Ovary (tissue), 10 donors: ENCODE measurements at regions of chr9 and their contacts with region 1.

Region 1: DNA sequence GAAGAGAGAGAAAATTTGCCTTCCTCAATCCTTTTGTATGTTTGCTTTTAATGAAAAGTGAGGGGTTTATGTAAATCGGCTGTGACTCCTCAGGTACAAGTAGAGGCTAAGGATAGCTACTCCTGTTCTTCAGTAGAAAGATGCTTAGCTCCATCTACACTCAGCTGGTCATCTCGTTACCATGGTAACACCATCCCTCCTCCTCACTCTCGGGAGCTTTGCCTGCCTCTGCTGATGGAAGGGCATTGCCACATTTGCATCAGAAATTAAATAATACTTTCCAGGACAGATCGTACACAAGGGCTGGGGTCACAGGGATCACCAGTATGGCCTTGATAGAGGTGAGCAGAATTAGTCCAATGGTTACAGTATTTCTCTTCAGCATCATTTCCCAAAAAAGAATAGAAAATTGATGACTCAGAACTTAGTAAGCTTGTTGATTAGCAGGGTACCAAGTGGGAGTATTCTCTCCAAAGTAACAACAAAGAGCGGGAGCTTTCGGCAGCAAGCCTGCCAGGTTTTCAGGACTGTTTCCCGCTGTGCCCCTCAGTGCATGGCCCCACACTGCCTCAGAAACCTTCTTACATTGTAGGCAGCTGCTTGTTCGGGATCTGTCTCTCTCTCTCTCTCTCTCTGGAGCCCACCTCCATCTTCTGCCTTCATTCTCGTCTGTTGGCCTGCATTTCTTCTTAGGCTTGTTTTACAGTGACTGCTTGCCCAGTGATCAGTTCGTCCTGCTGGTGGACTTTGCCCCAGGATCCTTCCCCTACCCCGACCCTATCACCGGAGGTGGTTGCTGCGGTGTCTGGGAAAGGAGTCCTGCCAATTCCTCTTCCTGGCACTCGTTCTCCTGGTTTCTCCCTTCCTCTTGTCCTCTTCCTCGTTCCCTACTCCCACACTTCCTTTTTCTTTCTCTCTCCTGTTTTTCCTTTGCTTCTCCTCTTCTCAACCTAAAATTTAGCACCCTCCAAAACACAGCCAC is 51.9 kb upstream of the SNAPC3 start:
- DNase-seq: peak; percentile 39 to 70 (median 50)
- H3K4me3 ChIP-seq: no peak overlapping the region
- H3K27ac ChIP-seq: peak overlapping the region in 1 of 2 donors; percentile 33
- H3K4me1 ChIP-seq: peaks cover 8% of the 10 kb centered on the region
- H3K27me3 ChIP-seq: no peaks in the 10 kb centered on the region
- CTCF ChIP-seq: no peak
- EP300 ChIP-seq: no peak
- POLR2A ChIP-seq: no peak

Region 2: GRCh38 chr9:15306757-15307534 is 63.8 kb before region 1 on chr9 and contains the start of gene TTC39B:
- intact Hi-C with region 1: loop called in 1 of 4 experiments (anchors 10 kb)
- DNase-seq: peak; percentile 90 to 96 (median 93)
- H3K4me3 ChIP-seq: peak within 1 kb of the TSS; percentile 84
- H3K27ac ChIP-seq: peak within 1 kb of the TSS; percentile 79 to 90
- H3K4me1 ChIP-seq: no peaks in the 10 kb centered on the region
- H3K27me3 ChIP-seq: no peaks in the 10 kb centered on the region
- CTCF ChIP-seq: no peak
- EP300 ChIP-seq: no peak
- POLR2A ChIP-seq: peak; percentile 78
- total RNA-seq, gene TTC39B: 8.6 to 26.0 (median 15.3) TPM

Region 3: DNA sequence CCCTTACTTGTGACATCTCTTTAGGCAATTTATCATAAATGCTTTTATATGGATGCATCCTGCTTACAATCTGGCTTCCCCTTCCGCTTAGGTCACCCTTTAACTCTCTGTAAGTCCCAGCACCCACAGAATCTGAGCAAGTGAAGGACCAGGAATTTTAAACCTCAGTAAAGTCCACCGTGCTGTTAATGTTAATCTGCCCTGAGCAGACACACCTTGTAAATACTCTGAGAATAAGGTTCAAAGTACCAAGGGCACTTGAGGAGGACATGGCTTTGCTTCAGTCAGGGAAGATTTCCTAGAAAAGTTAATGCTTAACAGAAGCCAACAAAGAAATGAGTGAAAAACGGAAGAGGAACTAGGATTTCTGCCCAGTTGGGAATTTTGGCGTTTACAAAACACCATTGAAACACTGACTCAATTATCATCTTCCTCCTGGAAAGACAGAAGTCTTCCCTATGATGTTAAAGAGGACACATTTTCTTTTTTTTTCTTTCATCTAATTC is 37.3 kb before region 1 on chr9:
- intact Hi-C with region 1: no loop called
- DNase-seq: no peak
- H3K4me3 ChIP-seq: no peak overlapping the region
- H3K27ac ChIP-seq: no peak overlapping the region
- H3K4me1 ChIP-seq: no peaks in the 10 kb centered on the region
- H3K27me3 ChIP-seq: no peaks in the 10 kb centered on the region
- CTCF ChIP-seq: no peak
- EP300 ChIP-seq: no peak
- POLR2A ChIP-seq: no peak

Region 4: DNA sequence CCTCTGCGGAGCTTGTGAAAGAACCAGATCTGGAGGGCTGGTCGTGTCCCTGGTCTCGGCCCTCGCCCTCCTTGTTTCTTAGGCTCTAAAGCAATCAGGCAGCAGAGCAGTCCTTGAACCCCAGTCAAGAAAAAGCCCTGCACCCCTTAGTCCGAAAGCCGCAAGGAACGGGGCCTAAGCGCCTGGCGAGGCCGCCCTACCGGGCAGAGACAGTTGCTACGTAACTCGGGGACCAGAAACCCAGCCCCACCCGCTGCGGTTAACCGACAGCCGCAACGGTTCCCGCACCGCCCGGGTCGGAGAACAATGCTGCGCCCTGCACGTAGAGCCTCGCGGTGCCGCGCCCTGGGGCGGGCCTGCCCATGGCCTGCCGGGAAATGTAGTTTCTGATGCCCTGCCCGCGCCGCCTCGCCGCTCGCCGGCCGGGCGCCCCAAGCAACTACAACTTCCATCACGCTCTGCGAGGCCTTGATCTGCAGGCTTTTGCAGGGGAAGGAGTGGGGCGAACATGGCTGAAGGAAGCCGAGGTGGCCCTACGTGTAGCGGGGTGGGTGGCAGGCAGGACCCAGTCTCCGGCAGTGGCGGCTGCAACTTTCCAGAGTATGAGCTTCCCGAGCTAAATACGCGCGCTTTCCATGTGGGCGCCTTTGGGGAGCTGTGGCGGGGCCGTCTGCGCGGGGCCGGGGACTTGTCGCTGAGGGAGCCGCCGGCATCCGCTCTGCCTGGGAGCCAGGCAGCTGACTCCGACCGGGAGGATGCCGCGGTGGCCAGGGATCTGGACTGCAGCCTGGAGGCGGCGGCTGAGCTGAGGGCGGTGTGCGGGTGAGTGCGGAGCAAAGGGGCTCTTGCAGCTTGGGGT is 51.8 kb after region 1 on chr9 and contains the start of gene SNAPC3:
- intact Hi-C with region 1: loop called in 1 of 4 experiments (anchors 10 kb)
- DNase-seq: peak; percentile 89 to 94 (median 93)
- H3K4me3 ChIP-seq: peak within 1 kb of the TSS; percentile 80
- H3K27ac ChIP-seq: peak within 1 kb of the TSS; percentile 47 to 90
- H3K4me1 ChIP-seq: peaks cover 3% of the 10 kb centered on the region
- H3K27me3 ChIP-seq: no peaks in the 10 kb centered on the region
- CTCF ChIP-seq: no peak
- EP300 ChIP-seq: peak; percentile 74
- POLR2A ChIP-seq: peak; percentile 39
- total RNA-seq, gene SNAPC3: 18.8 to 32.3 (median 26.2) TPM

Region 5: DNA sequence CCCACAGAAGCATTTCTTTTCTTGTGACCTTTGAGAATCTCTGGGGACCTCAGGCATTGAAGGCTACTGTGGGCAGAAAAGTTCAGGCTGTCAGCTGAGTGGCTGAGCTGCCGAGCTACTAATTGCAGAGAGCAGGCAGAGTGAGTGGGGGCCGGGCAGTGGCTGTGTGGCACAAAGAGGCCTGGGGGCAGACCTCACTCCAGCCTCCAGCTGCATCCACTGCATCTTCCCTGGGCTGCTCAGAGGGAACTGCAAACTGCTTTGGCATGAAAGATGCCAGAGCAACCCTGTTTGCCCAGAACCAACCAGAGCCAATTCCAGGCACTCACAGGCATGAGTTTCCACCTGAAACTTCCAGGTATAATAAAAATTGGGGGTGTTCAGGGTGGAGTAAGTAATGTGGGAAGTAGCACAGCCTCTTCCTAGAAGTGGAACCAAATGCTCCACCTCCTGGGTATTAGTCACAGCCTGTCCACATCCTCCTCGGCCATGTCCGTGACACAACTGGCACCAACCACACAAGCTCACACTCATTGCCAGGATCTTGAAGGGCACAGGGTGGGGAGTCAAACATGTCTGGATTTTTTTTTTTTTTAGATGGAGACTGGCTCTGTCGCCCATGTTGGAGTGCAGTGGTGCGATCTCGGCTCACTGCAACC is 950.8 kb after region 1 on chr9:
- intact Hi-C with region 1: no loop called
- DNase-seq: peak in 1 of 5 donors; percentile 32
- H3K4me3 ChIP-seq: no peak overlapping the region
- H3K27ac ChIP-seq: no peak overlapping the region
- H3K4me1 ChIP-seq: peaks cover 11% of the 10 kb centered on the region
- H3K27me3 ChIP-seq: no peaks in the 10 kb centered on the region
- CTCF ChIP-seq: no peak
- EP300 ChIP-seq: no peak
- POLR2A ChIP-seq: no peak